PC-3 (cell line): ENCODE measurements at regions of chr14 and their contacts with region 1.

Region 1: DNA sequence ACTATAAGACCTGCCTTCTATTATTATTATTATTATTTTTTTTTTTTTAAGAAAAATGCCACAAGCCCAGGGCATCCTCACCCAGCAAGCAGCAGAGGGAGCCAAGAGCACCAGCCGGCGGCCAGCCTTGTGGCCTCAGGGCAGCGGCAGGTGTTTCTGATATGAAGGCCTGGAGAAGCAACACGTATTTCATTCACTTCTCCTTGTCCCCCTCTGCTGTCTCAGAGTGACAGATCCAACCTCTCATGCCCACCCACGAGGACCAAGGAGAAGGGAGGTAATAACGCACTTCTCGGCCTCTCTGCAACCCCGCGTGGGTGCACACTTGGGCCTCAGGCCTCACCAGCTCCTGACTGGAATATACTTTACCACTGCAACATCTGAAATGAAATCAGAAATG is 25.4 kb downstream of the CDC42BPB start:
- DNase-seq: peak; percentile 42
- ATAC-seq: no peak
- H3K4me3 ChIP-seq: no peak overlapping the region
- H3K27ac ChIP-seq: no peak overlapping the region
- H3K4me1 ChIP-seq: peaks cover 47% of the 10 kb centered on the region
- H3K27me3 ChIP-seq: no peaks in the 10 kb centered on the region
- CTCF ChIP-seq: peak; percentile 26; the same call in 1 of the 2 replicates

Region 2: GRCh38 chr14:102899516-102899900 is 132.4 kb before region 1 on chr14:
- CTCF ChIA-PET with region 1: no interaction called
- POLR2A ChIA-PET with region 1: interaction called, 20 read pairs
- intact Hi-C with region 1: no loop called
- DNase-seq: no peak
- ATAC-seq: no peak
- H3K4me3 ChIP-seq: no peak overlapping the region
- H3K27ac ChIP-seq: no peak overlapping the region
- H3K4me1 ChIP-seq: no peaks in the 10 kb centered on the region
- H3K27me3 ChIP-seq: no peaks in the 10 kb centered on the region
- CTCF ChIP-seq: no peak

Region 3: GRCh38 chr14:102986810-102987579 is 45.0 kb before region 1 on chr14:
- CTCF ChIA-PET with region 1: no interaction called
- POLR2A ChIA-PET with region 1: no interaction called
- intact Hi-C with region 1: loop called (anchors 2 kb)
- DNase-seq: peak; percentile 76
- ATAC-seq: peak; percentile 89
- H3K4me3 ChIP-seq: no peak overlapping the region
- H3K27ac ChIP-seq: peak overlapping the region; percentile 60
- H3K4me1 ChIP-seq: peaks cover 15% of the 10 kb centered on the region
- H3K27me3 ChIP-seq: no peaks in the 10 kb centered on the region
- CTCF ChIP-seq: no peak

Region 4: GRCh38 chr14:103057365-103058096 is 25.6 kb after region 1 on chr14 and contains the start of gene CDC42BPB:
- CTCF ChIA-PET with region 1: no interaction called
- POLR2A ChIA-PET with region 1: interaction called, 3 read pairs
- intact Hi-C with region 1: loop called (anchors 2 kb)
- DNase-seq: peak; percentile 95
- ATAC-seq: peak; percentile 90
- H3K4me3 ChIP-seq: peak within 1 kb of the TSS; percentile 97
- H3K27ac ChIP-seq: peak within 1 kb of the TSS; percentile 47
- H3K4me1 ChIP-seq: peaks cover 20% of the 10 kb centered on the region; the same call in 1 of the 2 replicates
- H3K27me3 ChIP-seq: no peaks in the 10 kb centered on the region
- CTCF ChIP-seq: no peak
- total RNA-seq, gene CDC42BPB: 73.0 and 89.2 TPM in 2 replicates

Region 5: DNA sequence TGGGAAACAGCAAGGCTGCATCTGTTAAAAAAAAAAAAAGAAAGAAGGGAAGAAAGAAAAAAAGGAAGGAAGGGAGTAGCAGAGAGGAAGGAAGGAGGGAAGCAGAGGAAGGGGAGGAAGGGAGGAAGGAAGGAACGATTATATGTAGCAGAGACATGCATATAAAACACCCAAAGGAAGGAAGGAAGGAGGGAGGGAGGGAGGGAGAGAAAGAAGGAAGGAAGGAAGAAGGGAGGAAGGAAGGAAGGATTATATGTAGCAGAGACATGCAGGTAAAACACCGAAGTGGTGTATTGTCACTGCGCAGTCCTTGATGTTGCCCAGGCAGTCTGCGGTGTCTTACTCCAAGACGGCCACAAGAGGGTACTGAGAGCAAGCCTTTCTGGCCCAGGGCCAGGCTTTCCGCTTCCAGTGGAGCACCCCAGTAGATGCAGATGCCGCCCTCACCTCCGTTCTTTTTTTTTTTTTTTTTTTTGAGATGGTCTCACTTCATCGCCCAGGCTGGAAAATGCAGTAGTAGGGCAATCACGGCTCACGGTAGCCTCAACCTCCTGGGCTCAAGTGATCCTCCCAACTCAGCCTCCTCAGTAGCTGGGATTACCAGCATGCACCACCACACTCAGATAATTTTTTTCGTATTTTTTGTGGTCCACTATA is 46.3 kb after region 1 on chr14:
- CTCF ChIA-PET with region 1: no interaction called
- POLR2A ChIA-PET with region 1: no interaction called
- intact Hi-C with region 1: loop called (anchors 5 kb)
- DNase-seq: peak; percentile 78
- ATAC-seq: no peak
- H3K4me3 ChIP-seq: no peak overlapping the region
- H3K27ac ChIP-seq: no peak overlapping the region
- H3K4me1 ChIP-seq: peaks cover 12% of the 10 kb centered on the region; the same call in 1 of the 2 replicates
- H3K27me3 ChIP-seq: no peaks in the 10 kb centered on the region
- CTCF ChIP-seq: peak; percentile 71